Posterior vena cava (tissue), 2 donors: ENCODE measurements at regions of chr9 and their contacts with region 1.

Region 1: DNA sequence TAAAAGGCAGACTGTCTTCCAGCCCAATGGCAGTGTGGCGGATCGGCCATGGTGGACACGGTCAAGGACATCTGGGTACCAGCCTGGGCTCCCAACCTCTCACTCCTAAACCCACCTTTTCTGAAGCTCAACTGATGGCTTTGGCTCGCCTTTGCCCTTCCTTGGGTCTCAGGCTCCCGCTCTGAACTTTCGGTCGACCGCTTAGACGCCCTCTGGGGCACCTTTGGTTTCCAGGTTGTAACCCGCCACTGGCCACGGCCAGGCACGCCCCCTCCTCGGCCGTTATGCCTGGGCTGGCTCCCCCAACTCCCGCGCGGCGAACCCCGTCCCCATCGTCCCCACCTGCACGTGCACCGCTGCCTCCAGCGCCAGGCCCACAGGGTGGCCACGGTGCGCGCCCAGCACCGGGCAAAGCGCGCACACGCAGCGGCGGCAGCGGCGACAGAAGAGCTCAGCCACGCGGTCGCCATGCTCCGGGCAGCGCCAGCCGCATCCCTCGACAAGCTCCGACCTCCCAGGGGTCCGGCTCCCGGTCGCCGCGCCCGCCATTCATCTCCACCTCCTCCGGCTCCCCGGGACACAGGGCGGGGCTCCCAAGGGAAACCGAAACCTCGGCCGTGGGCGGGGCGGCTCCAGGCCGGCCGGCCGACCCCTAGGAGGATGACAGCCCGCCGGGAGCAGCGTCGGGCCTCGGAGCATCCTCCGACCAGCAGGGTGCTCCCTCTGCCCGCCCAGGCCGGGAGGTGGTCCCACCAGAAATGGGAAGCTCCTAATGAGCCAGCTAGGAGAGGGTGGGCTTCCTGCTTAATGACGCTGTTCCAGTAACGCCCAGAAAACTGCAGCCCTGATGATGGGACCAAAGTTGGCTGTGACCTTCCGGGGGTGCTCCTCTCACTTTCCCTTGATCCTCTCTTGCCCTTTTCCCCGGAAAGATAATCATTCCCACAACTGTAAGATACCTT is at the start of gene TRIM14:
- DNase-seq: peak; percentile 86
- total RNA-seq, gene TRIM14: 4.9 to 11.8 TPM

Region 2: DNA sequence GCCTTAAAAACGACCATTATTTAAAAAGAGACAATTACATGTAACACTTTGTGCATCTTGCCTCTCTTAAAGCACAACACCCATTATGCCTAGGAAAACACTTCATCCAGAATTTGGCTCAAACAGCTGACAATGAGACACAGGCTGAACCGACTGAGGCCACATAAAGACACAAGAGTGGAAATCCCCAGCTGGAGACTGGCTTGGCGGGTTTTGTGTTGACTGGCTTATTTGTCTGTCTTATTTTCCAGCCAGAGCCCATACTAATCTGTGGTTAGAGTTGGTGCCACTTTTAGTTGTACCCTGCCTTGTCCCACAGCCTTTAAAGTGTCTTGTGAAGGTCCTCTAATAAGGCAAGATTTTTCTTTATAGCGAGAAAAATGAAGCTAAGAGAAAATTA is 21.1 kb before region 1 on chr9:
- intact Hi-C with region 1: no loop called
- DNase-seq: no peak

Region 3: GRCh38 chr9:99057665-99058625 is 939.0 kb after region 1 on chr9:
- intact Hi-C with region 1: loop called in 1 of 2 experiments (anchors 5 kb)
- DNase-seq: no peak